HEK293 (cell line): ENCODE measurements at regions of chr3 and their contacts with region 1.

Region 1: GRCh38 chr3:50210510-50211367 is 5.7 kb downstream of the SLC38A3 start:
- H3K4me3 ChIP-seq: no peak overlapping the region
- H3K27ac ChIP-seq: no peak overlapping the region
- H3K4me1 ChIP-seq: no peaks in the 10 kb centered on the region
- CTCF ChIP-seq: no peak

Region 2: DNA sequence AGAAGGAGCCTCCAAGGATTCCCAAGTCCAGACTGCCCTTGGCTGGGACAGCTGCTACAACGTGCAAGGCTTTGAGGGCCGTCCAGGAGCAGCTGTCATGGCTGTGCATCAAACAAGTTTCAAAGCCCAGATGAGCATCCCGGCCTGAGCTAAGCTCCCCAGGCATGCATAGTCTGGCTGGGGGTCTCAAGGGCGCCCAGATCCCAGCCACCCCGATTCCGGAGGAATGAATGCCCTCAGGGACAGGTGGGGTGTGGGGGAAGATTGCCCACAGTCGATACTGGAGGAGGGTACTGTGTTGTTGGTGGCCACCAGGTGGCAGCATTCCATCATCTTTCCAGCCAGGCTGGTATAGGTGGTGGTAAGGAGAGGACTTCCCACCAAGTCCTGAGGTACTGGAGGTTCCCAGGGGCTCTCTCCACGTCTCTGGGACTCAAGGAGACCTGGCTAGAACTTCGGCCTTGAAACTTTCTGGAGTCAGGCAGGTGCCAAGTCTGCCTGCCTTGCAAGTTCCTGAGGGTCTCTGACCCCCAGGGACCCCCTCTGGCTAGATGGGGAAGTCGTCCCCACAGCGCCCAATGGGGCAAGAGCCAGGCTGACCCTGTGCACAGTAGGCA is 89.2 kb before region 1 on chr3:
- CTCF ChIA-PET with region 1: interaction called, 3 read pairs
- POLR2A ChIA-PET with region 1: interaction called, 12 read pairs
- H3K4me3 ChIP-seq: no peak overlapping the region
- H3K27ac ChIP-seq: no peak overlapping the region
- H3K4me1 ChIP-seq: peaks cover 7% of the 10 kb centered on the region
- CTCF ChIP-seq: peak; percentile 78

Region 3: GRCh38 chr3:50227390-50228183 is 16.8 kb after region 1 on chr3:
- CTCF ChIA-PET with region 1: interaction called, 15 read pairs
- POLR2A ChIA-PET with region 1: no interaction called
- H3K4me3 ChIP-seq: peak overlapping the region; percentile 55
- H3K27ac ChIP-seq: peak overlapping the region; percentile 60; the same call in 1 of the 2 replicates
- H3K4me1 ChIP-seq: no peaks in the 10 kb centered on the region
- CTCF ChIP-seq: peak; percentile 56

Region 4: GRCh38 chr3:50256807-50257535 is 46.2 kb after region 1 on chr3:
- CTCF ChIA-PET with region 1: no interaction called
- POLR2A ChIA-PET with region 1: no interaction called
- H3K4me3 ChIP-seq: no peak overlapping the region
- H3K27ac ChIP-seq: no peak overlapping the region
- H3K4me1 ChIP-seq: no peaks in the 10 kb centered on the region; the same call in 1 of the 2 replicates
- CTCF ChIP-seq: peak; percentile 49; the same call in 1 of the 2 replicates